AG04449 (cell line): ENCODE measurements at regions of chr2 and their contacts with region 1.

Region 1: GRCh38 chr2:216498418-216499413 is at the start of gene RPL37A:
- DNase-seq: peak; percentile 64
- H3K4me3 ChIP-seq: peak within 1 kb of the TSS; percentile 90
- CTCF ChIP-seq: no peak

Region 2: GRCh38 chr2:216108967-216109921 is 389.5 kb before region 1 on chr2 and contains the start of gene XRCC5:
- CTCF ChIA-PET with region 1: interaction called, 16 read pairs
- POLR2A ChIA-PET with region 1: interaction called, 4 read pairs
- DNase-seq: peak; percentile 76
- H3K4me3 ChIP-seq: peak within 1 kb of the TSS; percentile 94
- CTCF ChIP-seq: no peak

Region 3: GRCh38 chr2:216222650-216223352 is 275.9 kb before region 1 on chr2:
- CTCF ChIA-PET with region 1: interaction called, 11 read pairs
- POLR2A ChIA-PET with region 1: interaction called, 4 read pairs
- DNase-seq: no peak
- H3K4me3 ChIP-seq: no peak overlapping the region
- CTCF ChIP-seq: peak; percentile 49

Region 4: DNA sequence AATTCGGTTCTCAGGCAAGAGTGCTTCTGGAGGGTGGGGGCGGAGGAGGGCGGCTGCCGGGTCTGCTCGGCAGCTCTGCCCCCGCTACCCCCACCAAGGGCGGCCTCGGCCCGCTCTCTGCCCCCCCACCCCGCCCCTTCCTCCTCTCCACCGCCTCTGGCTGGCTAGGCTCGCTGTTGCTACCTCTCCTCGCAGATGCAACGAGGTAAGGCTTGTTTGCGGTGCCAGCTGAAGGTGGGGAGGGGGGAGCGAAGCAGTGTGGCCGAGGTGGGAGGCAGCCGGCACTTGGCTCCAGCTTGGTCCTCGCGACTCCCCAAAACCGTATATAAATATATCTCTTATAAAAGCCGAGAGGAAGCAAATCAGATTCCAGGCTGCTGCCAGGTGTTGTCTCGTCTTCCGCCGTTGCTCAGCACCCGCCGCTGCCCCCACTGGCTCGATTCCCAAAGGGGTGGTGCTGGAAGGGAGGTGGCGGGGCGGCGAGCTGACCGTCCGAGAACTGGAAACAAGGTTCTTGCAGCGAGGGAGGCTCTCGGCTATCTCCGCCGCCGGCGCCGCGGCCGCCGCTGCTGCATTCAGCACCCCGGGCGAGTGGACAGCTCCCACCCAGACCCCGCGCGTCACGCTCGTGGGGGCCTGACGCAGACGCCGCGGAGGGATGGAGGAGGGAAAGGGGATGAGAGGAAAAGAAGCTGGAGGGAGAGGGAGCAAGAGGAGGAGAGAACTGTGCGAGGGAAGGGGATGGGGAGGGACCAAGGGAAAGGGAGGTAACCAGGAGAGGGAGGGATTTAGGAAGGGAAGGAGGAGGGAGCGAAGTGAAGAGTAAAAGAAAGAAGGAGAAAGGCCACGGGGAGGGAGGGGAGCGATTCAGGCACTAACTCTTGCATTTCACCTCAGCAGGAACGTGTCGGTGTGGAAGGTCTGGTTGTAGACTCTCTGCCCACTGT is 126.7 kb before region 1 on chr2 and contains the start of gene MARCHF4:
- CTCF ChIA-PET with region 1: no interaction called
- POLR2A ChIA-PET with region 1: interaction called, 13 read pairs
- DNase-seq: peak; percentile 63
- H3K4me3 ChIP-seq: peak within 1 kb of the TSS; percentile 75
- CTCF ChIP-seq: no peak

Region 5: DNA sequence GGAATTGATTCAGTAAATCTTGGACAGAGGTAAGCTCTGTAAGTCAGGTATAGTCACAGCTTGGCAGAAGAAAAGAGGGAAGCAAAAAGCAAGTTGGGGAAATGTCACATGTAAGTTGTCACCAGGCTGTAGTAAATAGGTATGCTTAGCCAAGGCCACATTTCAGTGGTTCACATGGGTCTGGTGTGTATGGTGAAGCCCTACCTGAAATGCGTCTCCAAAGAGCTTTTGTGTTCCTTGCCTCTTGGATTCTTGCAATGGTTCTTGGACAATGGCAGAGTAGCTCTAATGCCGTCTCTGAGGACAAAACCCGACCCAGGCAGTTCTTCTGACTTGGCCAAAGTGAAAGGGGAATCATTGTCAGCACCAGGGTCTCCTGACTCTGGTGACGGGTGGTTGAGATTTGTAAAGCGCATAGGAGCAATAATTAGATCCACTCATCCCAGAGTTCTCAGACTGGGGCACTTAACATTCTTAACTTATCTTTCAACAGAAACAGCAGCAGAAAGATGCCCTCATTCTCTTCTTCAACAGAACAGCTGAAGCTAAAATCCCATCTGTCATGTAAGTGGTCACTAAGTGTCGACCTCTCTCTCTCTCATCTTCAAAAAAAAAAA is 34.5 kb before region 1 on chr2:
- CTCF ChIA-PET with region 1: no interaction called
- POLR2A ChIA-PET with region 1: no interaction called
- DNase-seq: no peak
- H3K4me3 ChIP-seq: no peak overlapping the region
- CTCF ChIP-seq: no peak

Region 6: DNA sequence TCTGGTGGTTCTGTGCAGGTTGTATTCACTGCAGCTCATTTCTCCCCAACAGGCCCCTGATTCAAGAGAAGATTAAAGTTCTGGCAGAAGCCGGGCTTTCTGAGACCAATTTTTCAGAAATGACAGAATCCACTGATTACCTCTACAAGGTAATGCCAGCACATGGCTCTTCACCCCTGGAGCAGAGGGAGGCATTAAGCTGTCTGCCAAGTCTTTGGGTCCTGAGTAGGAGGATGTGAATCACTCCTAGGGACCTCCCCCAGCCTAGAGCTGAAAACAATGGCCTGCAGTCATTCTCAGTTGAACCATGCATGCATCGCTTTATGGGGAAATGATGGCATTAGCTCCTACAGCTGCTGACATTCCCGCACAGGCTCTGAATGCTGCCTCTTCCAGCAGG is 20.6 kb before region 1 on chr2:
- CTCF ChIA-PET with region 1: no interaction called
- POLR2A ChIA-PET with region 1: interaction called, 12 read pairs
- DNase-seq: peak; percentile 33
- H3K4me3 ChIP-seq: no peak overlapping the region
- CTCF ChIP-seq: no peak

Region 7: DNA sequence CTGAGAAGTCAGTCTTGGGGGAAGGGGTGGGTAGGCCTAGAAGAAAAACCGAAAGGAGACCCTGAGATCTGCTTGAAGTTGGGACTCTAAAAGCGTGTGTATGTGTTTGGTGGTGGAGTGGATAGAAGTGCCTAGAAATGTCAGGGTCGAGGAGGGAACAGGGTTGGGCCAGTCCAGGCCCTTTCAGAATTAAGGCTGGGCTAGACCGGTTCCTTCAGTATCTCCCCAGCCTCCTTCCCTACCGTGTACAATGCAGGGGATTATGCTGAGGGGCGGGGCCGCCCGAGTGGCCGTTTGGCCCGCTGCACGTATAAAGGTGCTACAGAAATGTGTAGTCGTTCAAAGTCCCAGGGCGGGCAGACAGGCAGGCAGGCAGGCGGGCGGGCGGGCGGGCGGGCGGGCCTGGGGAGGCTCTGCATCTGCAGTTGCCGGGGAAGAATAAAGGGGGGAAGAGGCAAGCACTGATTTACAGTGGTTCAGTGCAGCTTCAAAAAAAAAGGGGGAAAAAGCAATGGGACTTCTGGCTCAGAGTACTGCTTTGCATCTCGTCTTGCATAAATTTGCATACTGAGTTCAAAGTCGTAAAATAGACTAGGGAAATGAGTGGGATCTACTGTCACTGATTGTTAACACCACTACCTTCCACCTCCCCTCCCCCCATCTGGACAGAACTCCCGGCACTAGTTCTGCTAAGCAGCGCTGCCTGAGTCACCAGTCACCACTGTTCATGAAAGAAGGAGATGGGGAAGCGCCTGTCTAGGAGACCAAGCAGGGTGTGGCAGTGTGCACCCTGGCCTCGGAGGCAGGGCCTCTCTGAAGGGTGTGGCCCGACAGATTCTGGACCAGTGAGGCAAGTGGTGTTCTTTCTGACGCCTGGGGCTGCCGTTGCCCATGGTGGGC is 138.1 kb after region 1 on chr2:
- CTCF ChIA-PET with region 1: no interaction called
- POLR2A ChIA-PET with region 1: no interaction called
- DNase-seq: no peak
- H3K4me3 ChIP-seq: no peak overlapping the region; the same call in 1 of the 2 replicates
- CTCF ChIP-seq: no peak